ENCODE measurements at regions of chr13 and their contacts with region 1.

Region 1: GRCh38 chr13:38349390-38350113 is at the start of gene UFM1:
- DNase-seq: peak; percentile 94
- ATAC-seq: peak; percentile 99 to 100
- total RNA-seq, gene UFM1: 27.2 to 40.3 TPM

Region 2: GRCh38 chr13:37068962-37069361 is 1280.6 kb before region 1 on chr13:
- intact Hi-C with region 1: loop called in 1 of 2 experiments (anchors 10 kb)
- DNase-seq: no peak
- ATAC-seq: no peak

Region 3: GRCh38 chr13:38180670-38181069 is 168.9 kb before region 1 on chr13:
- intact Hi-C with region 1: no loop called
- DNase-seq: no peak
- ATAC-seq: no peak

Measured in left cardiac atrium (tissue), 4 donors.